CD8-positive, alpha-beta T cell (primary cell): ENCODE measurements at regions of chr22 and their contacts with region 1.

Region 1: DNA sequence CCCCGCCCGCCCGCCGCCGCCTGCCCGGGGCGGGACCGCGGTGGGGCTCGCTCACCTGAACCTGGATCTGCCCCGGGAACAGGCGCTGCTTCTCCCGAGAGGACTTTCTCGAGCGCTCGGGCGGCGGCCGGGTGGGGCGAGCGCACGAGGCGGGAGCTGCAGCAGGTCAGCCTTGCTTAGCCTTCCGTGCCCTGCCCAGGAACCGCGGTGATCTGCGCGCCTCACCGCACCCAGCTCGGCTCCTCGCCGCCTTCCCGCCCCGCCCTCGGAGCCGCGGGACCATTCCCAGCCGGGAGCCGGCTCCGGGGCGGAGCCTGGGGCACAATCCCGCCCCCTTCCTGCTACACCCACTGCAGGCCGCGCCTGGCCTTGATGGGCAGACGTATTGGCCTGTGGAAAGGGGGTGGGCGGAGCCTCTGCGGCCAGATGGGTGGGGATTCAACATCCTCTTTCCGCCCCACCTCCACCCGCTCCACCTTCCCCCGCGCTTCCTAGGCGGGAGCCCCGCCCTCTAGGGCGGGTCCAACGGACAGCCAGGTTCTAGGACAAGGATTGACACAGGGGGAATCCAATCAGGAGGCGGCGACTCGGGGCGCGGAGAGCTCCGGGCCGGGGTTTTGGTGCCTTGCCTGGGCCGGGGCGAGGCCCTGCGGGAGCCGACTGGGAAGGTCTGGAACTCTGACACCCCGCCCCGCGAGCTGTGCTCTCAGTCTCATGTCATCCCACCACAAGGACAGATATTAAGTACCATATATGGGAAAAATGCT is at the start of gene MYH9:
- DNase-seq: peak; percentile 96 to 100 (median 99)
- ATAC-seq: peak; percentile 77
- H3K4me3 ChIP-seq: peak within 1 kb of the TSS; percentile 88 to 94
- H3K4me3 Mint-ChIP-seq: peak within 1 kb of the TSS; percentile 94
- H3K27ac ChIP-seq: peak within 1 kb of the TSS; percentile 79 to 82
- H3K27ac Mint-ChIP-seq: peak within 1 kb of the TSS; percentile 95
- H3K4me1 ChIP-seq: peaks cover 27% of the 10 kb centered on the region
- H3K4me1 Mint-ChIP-seq: peaks cover 43% of the 10 kb centered on the region
- H3K27me3 ChIP-seq: no peaks in the 10 kb centered on the region
- H3K27me3 Mint-ChIP-seq: no peaks in the 10 kb centered on the region
- CTCF ChIP-seq: no peak
- total RNA-seq, gene MYH9: 703 to 757 TPM

Region 2: GRCh38 chr22:36301384-36301828 is 86.5 kb before region 1 on chr22:
- CTCF ChIA-PET with region 1: interaction called, 20 read pairs
- POLR2A ChIA-PET with region 1: interaction called, 4 read pairs
- intact Hi-C with region 1: no loop called
- DNase-seq: peak; percentile 67 to 92 (median 85)
- ATAC-seq: peak; percentile 94
- H3K4me3 ChIP-seq: no peak overlapping the region
- H3K4me3 Mint-ChIP-seq: no peak overlapping the region
- H3K27ac ChIP-seq: peak overlapping the region in 1 of 2 experiments; percentile 34
- H3K27ac Mint-ChIP-seq: peak overlapping the region; percentile 82
- H3K4me1 ChIP-seq: peaks cover 6% of the 10 kb centered on the region
- H3K4me1 Mint-ChIP-seq: peaks cover 9% of the 10 kb centered on the region
- H3K27me3 ChIP-seq: no peaks in the 10 kb centered on the region
- H3K27me3 Mint-ChIP-seq: no peaks in the 10 kb centered on the region
- CTCF ChIP-seq: peak; percentile 89

Region 3: GRCh38 chr22:36352803-36353507 is 35.0 kb before region 1 on chr22:
- CTCF ChIA-PET with region 1: interaction called, 3 read pairs
- POLR2A ChIA-PET with region 1: interaction called, 17 read pairs
- intact Hi-C with region 1: loop called (anchors 1 to 2 kb)
- DNase-seq: peak in 5 of 9 experiments; percentile 51 to 81 (median 67)
- ATAC-seq: peak; percentile 32
- H3K4me3 ChIP-seq: peak overlapping the region in 1 of 2 experiments; percentile 36
- H3K4me3 Mint-ChIP-seq: peak overlapping the region; percentile 69
- H3K27ac ChIP-seq: peak overlapping the region; percentile 38 to 74
- H3K27ac Mint-ChIP-seq: peak overlapping the region; percentile 95
- H3K4me1 ChIP-seq: peaks cover 95% of the 10 kb centered on the region
- H3K4me1 Mint-ChIP-seq: peaks cover 95% of the 10 kb centered on the region
- H3K27me3 ChIP-seq: no peaks in the 10 kb centered on the region
- H3K27me3 Mint-ChIP-seq: no peaks in the 10 kb centered on the region
- CTCF ChIP-seq: no peak

Region 4: DNA sequence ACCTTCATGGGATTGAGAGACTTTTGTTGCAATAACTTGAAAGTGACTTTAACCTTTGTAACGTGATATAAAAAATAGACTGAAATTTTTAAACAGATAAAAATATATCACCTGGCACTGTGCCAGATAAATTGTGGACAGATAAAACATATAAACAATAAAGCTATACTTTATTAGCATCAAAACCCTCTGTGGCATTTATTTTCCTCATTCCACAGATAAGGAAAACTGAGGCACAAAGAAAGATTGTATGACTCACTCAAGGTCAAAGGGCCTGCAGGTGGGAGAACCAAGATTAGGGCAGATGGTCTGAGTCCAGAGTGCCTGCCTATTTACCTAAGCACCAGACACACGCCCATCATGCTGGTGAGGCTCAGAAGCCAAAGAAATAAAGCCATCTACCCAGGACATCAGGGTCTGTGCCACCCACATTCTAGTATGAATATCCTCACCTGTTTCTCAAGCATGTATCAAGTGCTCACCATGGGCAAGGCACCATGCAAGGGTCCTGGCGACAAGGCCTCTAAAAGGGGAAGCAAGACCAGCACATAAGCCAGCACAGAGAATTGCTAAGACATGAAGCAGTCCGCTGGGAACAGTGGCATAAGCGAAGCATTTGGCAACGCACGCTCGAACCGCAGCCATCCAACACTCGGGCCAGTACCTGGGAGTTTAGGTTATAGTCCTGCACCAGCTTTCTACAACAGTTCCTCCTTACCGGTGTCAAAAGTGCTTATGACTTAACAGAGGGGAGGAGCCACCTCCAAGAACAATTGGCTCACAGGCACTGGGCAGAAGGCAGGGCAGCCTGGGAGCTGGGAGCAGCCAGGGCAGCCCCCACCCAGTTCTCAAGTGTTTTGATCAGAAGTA is 17.8 kb before region 1 on chr22:
- CTCF ChIA-PET with region 1: interaction called, 21 read pairs
- POLR2A ChIA-PET with region 1: interaction called, 78 read pairs
- intact Hi-C with region 1: loop called (anchors 1 kb)
- DNase-seq: peak in 3 of 9 experiments; percentile 41 to 65 (median 49)
- ATAC-seq: peak; percentile 30
- H3K4me3 ChIP-seq: peak overlapping the region; percentile 28 to 48
- H3K4me3 Mint-ChIP-seq: peak overlapping the region; percentile 82
- H3K27ac ChIP-seq: peak overlapping the region; percentile 55 to 85
- H3K27ac Mint-ChIP-seq: peak overlapping the region; percentile 95
- H3K4me1 ChIP-seq: peaks cover 100% of the 10 kb centered on the region
- H3K4me1 Mint-ChIP-seq: peaks cover 92% of the 10 kb centered on the region
- H3K27me3 ChIP-seq: no peaks in the 10 kb centered on the region
- H3K27me3 Mint-ChIP-seq: no peaks in the 10 kb centered on the region
- CTCF ChIP-seq: no peak

Region 5: DNA sequence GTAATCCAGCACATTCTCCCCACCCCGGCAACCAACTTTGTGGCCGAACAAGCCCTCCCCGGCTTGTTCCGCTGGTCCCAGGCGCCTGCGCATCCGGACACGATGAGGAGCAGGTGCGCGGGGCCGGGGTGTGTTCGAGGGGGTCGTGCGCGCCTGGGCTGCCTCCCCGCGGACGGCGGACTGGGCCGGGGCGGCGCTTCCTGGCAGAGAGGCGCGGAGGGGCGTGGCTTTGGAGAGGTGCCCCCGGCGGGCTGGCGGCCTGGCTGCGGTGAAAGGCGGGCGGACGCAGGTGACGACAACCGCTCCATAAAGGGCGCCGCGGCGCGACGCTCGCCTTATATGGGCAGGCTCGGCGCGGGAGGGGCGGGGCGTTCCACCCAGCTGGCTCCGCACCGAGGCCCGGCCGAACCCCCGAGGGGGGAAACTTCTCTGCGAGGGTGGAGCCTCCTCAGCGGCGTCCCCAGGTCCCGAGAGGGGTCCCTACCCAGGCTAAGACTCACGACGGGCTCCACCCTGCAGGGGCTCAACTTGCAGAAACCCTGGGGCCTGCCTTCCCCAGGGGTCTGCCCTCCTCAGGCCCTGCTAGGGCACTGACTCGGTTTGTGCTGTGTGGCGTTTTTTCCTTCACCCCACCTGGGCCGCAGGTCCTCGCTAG is 67.1 kb after region 1 on chr22:
- CTCF ChIA-PET with region 1: interaction called, 4 read pairs
- POLR2A ChIA-PET with region 1: interaction called, 9 read pairs
- intact Hi-C with region 1: loop called (anchors 1 kb)
- DNase-seq: peak; percentile 88 to 99 (median 96)
- ATAC-seq: peak; percentile 71
- H3K4me3 ChIP-seq: peak overlapping the region; percentile 64 to 84
- H3K4me3 Mint-ChIP-seq: peak overlapping the region; percentile 79
- H3K27ac ChIP-seq: peak overlapping the region; percentile 91 to 96
- H3K27ac Mint-ChIP-seq: peak overlapping the region; percentile 90
- H3K4me1 ChIP-seq: peaks cover 51% of the 10 kb centered on the region
- H3K4me1 Mint-ChIP-seq: peaks cover 43% of the 10 kb centered on the region
- H3K27me3 ChIP-seq: no peaks in the 10 kb centered on the region
- H3K27me3 Mint-ChIP-seq: no peaks in the 10 kb centered on the region
- CTCF ChIP-seq: no peak

Region 6: DNA sequence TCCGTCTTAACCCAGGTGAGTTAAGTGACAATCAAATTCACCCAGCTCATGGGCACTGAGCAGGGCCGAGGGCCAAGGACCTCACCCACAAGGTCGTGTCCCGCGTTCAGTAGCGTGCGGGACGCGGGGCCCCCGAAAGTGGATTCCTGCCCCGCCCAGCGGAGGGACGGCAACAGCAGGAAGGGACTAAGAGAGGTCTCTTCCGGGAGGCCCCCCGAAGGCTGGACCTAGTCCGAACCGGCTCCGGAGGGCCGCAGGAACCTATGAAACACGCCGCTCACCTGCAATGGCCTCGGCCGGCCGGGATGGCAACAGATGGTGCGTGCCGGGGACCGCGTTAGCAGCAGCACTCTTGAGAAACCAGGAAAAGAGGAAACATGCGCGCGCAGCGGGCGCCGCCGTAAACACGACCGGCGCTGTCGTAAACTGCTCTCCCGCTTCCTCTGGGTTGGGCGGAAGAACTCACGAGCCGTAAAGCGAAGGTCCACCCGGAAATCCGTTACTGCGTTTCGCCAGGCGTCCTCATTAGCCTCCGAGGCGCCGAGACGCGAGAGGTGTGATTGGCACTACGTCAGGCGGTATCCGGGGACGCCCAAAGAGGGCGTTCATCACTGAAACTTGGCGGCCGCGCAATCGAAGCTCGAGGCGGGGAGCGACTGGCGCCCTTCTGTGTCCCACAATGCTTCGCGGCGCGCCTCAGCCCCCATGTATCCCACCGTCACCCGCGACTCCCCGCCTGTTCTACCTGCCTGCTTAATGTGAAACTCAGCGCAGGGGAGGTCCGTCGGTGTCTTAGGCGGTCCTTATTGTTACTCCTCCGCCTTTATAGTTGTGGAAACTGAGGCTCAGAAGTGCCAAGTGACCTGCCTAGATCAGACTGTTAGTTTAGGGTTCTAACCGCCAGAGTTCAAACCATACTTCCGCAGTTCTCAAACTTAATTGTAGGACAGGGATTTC is 141.1 kb after region 1 on chr22 and contains the start of gene EIF3D:
- CTCF ChIA-PET with region 1: no interaction called
- POLR2A ChIA-PET with region 1: no interaction called
- intact Hi-C with region 1: loop called (anchors 1 kb)
- DNase-seq: peak; percentile 95 to 100 (median 98)
- ATAC-seq: peak; percentile 92
- H3K4me3 ChIP-seq: peak within 1 kb of the TSS; percentile 67 to 90
- H3K4me3 Mint-ChIP-seq: peak within 1 kb of the TSS; percentile 90
- H3K27ac ChIP-seq: peak within 1 kb of the TSS; percentile 91 to 93
- H3K27ac Mint-ChIP-seq: peak within 1 kb of the TSS; percentile 99
- H3K4me1 ChIP-seq: peaks cover 12% of the 10 kb centered on the region
- H3K4me1 Mint-ChIP-seq: peaks cover 24% of the 10 kb centered on the region
- H3K27me3 ChIP-seq: no peaks in the 10 kb centered on the region
- H3K27me3 Mint-ChIP-seq: no peaks in the 10 kb centered on the region
- CTCF ChIP-seq: no peak
- total RNA-seq, gene EIF3D: 302 to 315 TPM